ENCODE measurements at regions of chr6 and their contacts with region 1.

Region 1: DNA sequence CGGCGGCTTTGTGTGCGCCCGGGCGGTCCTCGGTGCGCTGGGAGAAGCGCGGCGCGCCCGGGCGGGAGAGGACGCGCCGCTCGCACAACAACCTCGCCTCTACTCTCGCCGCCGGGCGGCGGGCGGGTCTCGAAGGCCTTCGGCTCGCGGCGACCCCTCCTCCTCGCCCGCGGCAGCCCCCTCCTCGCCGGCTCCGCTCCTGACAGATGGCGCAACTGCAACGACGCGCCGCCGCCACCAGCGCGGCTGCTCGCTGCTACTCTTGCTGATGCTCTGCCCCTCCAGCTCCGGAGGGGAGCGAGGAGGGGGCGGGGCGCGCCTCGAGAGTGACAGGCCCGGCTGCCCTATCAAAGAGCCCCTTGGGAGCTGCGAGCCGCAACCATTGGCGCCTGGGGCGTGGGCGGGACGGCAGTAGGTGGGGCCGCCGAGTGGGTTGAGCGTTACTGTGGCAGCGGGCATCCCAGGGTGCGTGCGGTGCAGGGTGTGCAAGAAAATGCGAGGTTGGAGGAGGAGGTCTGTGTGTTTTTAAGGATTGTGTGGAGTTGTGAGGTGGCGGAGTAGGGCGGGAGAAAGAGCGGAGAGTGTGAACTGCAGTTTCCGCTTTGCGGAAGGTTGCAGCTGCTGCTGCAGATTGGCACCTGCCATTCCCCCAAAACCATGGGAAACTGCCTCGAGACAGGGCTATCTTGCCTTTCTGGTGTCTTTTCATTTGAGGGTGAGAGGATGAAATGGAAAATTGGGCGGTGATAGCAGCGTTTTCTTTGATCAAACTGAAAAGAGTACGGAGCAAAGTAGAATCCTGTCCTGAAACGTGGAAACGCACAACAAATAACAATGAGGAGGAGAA is at the start of gene FYN:
- DNase-seq: peak; percentile 98 to 100 (median 99)
- H3K4me3 ChIP-seq: peak within 1 kb of the TSS; percentile 58 to 95 (median 83)
- H3K27ac ChIP-seq: peak within 1 kb of the TSS; percentile 62 to 97 (median 91)
- H3K27me3 ChIP-seq: no peaks in the 10 kb centered on the region
- CTCF ChIP-seq: peak in 55 of 56 donors; percentile 12 to 69 (median 49)
- total RNA-seq, gene FYN: 174 to 413 (median 233) TPM

Region 2: GRCh38 chr6:111541026-111541681 is 332.2 kb before region 1 on chr6:
- intact Hi-C with region 1: no loop called
- DNase-seq: no peak
- H3K4me3 ChIP-seq: peak overlapping the region in 12 of 59 donors; percentile 1 to 45 (median 13)
- H3K27ac ChIP-seq: peak overlapping the region in 49 of 59 donors; percentile 5 to 74 (median 54)
- H3K27me3 ChIP-seq: no peaks in the 10 kb centered on the region
- CTCF ChIP-seq: no peak

Region 3: GRCh38 chr6:111709615-111710398 is 163.6 kb before region 1 on chr6:
- intact Hi-C with region 1: loop called (anchors 1 to 2 kb)
- DNase-seq: peak in 6 of 10 donors; percentile 47 to 69 (median 60)
- H3K4me3 ChIP-seq: peak overlapping the region in 54 of 59 donors; percentile 1 to 62 (median 34)
- H3K27ac ChIP-seq: peak overlapping the region in 54 of 59 donors; percentile 4 to 86 (median 76)
- H3K27me3 ChIP-seq: no peaks in the 10 kb centered on the region
- CTCF ChIP-seq: peak; percentile 75 to 97 (median 90)

Region 4: DNA sequence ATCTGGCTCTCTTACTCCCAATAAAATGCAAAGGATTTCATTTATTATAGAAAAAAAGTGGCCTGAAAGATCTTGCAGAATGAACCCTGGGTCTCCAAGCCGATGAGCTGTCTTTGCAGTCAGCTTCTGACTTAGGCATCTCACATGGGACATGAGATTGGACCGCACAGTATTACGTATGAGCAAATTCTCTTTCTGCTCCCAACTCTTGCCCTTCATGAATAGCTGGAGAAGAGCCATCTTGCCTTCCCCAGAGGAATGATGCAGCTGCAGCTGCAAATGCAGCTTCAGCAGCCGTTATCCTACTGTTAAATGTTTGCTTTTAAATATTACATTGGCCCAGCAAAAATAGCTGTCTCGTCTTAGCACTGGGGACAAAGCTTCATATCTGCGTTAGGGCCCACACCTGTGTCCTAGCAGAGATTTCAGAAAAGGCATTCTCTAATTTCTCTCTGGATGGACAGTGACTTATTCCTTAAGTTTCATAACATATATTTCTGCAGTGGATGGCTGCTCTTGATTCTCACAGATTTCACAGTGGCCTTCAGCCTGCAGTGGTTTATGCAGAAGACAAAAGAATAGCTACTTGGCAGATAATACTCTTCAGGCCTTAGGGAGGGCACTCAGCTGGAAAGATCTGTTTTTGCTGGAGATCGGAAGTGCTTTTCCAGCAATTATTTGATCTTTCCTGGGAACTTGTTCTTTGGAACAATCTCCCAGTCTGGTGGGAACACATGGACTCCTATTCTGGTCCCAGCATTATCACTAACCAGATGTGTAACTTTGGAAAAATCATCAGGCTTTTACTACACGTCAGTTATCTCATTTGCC is 129.3 kb before region 1 on chr6:
- intact Hi-C with region 1: loop called in 1 of 2 experiments (anchors 10 kb)
- DNase-seq: peak in 1 of 10 donors; percentile 64
- H3K4me3 ChIP-seq: peak overlapping the region in 46 of 59 donors; percentile 1 to 51 (median 26)
- H3K27ac ChIP-seq: peak overlapping the region; percentile 8 to 95 (median 84)
- H3K27me3 ChIP-seq: no peaks in the 10 kb centered on the region
- CTCF ChIP-seq: peak in 4 of 56 donors; percentile 7 to 28 (median 13)

Region 5: GRCh38 chr6:111764238-111765175 is 108.9 kb before region 1 on chr6:
- intact Hi-C with region 1: loop called in 1 of 2 experiments (anchors 5 kb)
- DNase-seq: no peak
- H3K4me3 ChIP-seq: peak overlapping the region in 3 of 59 donors; percentile 8 to 19 (median 9)
- H3K27ac ChIP-seq: peak overlapping the region in 54 of 59 donors; percentile 0 to 85 (median 64)
- H3K27me3 ChIP-seq: no peaks in the 10 kb centered on the region
- CTCF ChIP-seq: no peak

Region 6: DNA sequence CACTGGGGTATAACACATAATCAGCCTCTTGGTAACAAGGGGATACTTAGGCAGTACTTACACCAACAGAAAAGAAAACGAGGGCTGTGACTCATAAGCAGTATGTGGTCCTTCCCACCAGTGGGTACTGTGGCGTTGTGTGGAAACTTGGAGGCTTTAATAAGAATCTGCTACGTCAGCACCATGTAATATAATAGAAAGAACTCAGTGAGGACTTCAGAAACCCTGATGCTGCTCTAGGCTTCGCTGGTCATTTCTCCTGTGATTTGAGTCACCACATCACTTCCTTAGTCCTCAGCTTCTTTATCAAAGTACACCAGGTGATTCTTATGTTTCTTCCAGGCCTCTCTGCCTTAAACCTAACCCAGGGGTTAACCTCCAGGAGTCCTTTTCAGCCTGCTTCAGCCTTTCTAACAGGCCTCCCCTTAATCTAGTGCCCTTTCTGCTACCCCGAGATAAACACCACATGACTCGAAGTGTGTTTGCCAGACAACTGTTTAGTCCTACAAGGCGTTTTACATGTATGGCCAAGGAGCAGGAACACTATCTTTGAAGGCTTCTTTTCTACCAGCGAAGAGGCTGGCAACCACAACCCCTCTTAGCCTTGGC is 68.7 kb before region 1 on chr6:
- intact Hi-C with region 1: loop called in 1 of 2 experiments (anchors 5 kb)
- DNase-seq: no peak
- H3K4me3 ChIP-seq: no peak overlapping the region
- H3K27ac ChIP-seq: peak overlapping the region in 56 of 59 donors; percentile 0 to 90 (median 72)
- H3K27me3 ChIP-seq: no peaks in the 10 kb centered on the region
- CTCF ChIP-seq: peak in 1 of 56 donors; percentile 10

Region 7: DNA sequence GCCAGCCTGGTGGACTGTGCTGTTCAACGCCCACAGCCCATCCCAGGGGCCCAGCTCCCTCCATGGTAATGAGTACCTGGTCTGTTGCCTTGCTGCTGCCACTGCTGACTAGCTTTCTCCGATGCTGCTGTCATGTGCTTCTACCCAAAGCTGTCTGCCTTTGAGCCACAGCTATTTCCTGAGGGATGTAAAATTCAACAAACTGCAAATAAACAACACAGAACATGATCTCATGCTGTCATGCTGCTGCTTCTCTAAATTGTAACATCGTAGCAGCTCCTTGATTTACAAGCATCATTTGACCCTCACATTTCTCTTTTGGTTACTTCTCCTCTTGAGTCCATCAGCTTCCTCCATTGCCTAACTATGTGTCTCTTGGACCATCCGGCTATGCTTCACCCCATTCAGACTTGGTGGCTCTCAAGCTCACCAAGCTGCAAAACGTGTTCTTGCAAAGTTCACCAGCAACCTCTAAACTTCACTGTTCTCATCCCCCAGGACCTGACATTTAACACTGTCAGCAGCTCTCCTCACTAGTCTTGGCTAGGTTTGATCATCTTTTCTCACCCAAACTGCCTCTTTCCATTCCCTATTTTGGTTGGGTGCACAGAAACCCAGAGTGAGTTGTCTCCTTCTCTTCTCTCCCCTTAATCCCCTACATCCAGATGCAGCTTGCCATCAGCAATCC is 54.7 kb before region 1 on chr6:
- intact Hi-C with region 1: loop called in 1 of 2 experiments (anchors 5 kb)
- DNase-seq: no peak
- H3K4me3 ChIP-seq: peak overlapping the region in 6 of 59 donors; percentile 4 to 51 (median 34)
- H3K27ac ChIP-seq: peak overlapping the region in 55 of 59 donors; percentile 11 to 90 (median 78)
- H3K27me3 ChIP-seq: no peaks in the 10 kb centered on the region
- CTCF ChIP-seq: no peak

Region 8: GRCh38 chr6:111997078-111997852 is 123.9 kb after region 1 on chr6:
- intact Hi-C with region 1: loop called (anchors 2 to 5 kb)
- DNase-seq: peak; percentile 57 to 88 (median 81)
- H3K4me3 ChIP-seq: peak overlapping the region in 45 of 59 donors; percentile 2 to 56 (median 29)
- H3K27ac ChIP-seq: peak overlapping the region in 11 of 59 donors; percentile 4 to 61 (median 32)
- H3K27me3 ChIP-seq: no peaks in the 10 kb centered on the region
- CTCF ChIP-seq: peak; percentile 88 to 99 (median 95)